ENCODE measurements at regions of chr15 and their contacts with region 1.

Region 1: DNA sequence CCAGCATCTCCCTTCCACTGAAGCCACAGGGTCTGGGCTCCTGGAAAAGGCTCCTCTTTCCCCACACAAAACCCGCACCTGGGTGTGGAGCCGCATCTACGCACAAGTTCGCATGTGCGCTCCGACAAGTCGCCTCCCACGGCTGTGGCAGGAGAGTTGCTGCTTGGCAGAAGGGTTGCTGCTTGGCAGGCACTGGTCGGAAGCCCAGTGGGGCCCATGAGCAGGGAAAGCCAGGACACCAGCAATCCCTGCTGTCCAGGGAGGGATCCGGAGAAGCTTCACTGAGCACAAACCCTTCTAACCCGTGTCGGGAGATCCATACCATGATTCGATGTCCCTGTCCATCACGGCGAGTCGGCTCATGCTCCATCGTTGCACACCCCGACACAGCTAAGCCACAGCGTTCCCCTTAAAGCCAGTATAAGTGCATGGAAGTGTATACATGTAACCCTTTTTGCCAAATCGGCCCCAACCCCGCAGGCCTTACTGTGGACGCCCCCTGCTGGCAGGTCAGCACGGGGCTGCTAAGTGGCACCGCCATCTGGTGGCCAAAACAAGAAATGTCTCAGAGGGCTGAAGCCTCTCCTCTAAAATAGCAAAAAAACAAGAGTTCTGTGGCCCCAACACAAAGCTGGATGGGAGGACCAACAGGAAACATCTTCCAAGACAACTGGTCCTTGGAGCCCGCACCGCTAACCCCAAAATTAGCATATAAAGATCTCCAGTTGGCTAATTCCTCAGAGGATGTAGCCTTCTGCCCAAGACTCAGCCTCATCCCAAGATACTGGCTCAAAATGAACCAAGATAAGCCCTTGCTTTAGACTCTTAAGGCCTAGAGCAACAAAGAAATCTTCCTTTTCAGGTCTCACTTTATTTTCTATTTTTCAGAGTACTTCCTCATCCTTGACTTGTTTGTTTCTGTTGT is 8.3 kb downstream of the ANKRD63 start:
- DNase-seq: peak; percentile 83
- H3K4me3 Mint-ChIP-seq: no peak overlapping the region
- H3K27ac Mint-ChIP-seq: no peak overlapping the region
- H3K4me1 Mint-ChIP-seq: peaks cover 5% of the 10 kb centered on the region
- H3K27me3 Mint-ChIP-seq: peaks cover 31% of the 10 kb centered on the region

Region 2: GRCh38 chr15:40029979-40030893 is 244.4 kb before region 1 on chr15:
- intact Hi-C with region 1: loop called (anchors 1 kb)
- DNase-seq: no peak
- H3K4me3 Mint-ChIP-seq: no peak overlapping the region
- H3K27ac Mint-ChIP-seq: no peak overlapping the region
- H3K4me1 Mint-ChIP-seq: no peaks in the 10 kb centered on the region
- H3K27me3 Mint-ChIP-seq: no peaks in the 10 kb centered on the region

Region 3: GRCh38 chr15:40217159-40217824 is 57.3 kb before region 1 on chr15:
- intact Hi-C with region 1: loop called (anchors 1 kb)
- DNase-seq: peak; percentile 38
- H3K4me3 Mint-ChIP-seq: no peak overlapping the region
- H3K27ac Mint-ChIP-seq: no peak overlapping the region
- H3K4me1 Mint-ChIP-seq: no peaks in the 10 kb centered on the region
- H3K27me3 Mint-ChIP-seq: no peaks in the 10 kb centered on the region

Region 4: GRCh38 chr15:40338041-40338657 is 63.5 kb after region 1 on chr15:
- intact Hi-C with region 1: loop called (anchors 1 kb)
- DNase-seq: peak; percentile 70
- H3K4me3 Mint-ChIP-seq: no peak overlapping the region
- H3K27ac Mint-ChIP-seq: no peak overlapping the region
- H3K4me1 Mint-ChIP-seq: peaks cover 18% of the 10 kb centered on the region
- H3K27me3 Mint-ChIP-seq: peaks cover 2% of the 10 kb centered on the region

Region 5: DNA sequence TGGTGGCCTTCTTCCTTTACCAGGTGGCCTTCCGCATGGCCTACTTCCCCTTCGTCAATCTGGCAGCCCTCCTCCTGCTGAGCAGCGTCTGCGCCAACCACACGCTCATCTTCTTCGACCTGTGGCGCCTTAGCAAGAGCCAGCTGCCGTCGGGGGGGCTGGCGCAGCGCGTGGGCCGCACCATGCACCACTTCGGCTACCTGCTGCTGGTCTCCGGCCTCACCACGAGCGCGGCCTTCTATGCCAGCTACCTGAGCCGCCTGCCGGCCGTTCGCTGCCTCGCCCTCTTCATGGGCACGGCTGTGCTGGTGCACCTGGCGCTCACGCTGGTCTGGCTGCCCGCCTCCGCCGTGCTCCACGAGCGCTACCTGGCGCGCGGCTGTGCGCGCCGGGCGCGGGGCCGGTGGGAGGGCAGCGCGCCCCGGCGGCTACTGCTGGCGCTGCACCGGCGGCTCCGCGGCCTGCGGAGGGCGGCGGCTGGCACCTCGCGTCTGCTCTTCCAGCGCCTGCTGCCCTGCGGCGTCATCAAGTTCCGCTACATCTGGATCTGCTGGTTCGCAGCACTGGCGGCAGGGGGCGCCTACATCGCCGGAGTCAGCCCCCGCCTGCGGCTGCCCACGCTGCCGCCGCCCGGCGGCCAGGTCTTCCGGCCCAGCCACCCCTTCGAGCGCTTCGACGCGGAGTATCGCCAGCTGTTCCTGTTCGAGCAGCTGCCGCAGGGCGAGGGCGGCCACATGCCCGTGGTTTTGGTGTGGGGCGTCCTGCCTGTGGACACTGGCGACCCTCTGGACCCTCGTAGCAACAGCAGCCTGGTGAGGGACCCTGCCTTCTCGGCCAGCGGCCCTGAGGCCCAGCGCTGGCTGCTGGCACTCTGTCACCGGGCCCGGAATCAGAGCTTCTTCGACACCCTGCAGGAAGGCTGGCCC is 93.3 kb after region 1 on chr15:
- intact Hi-C with region 1: no loop called
- DNase-seq: peak; percentile 83
- H3K4me3 Mint-ChIP-seq: peak overlapping the region; percentile 75
- H3K27ac Mint-ChIP-seq: no peak overlapping the region
- H3K4me1 Mint-ChIP-seq: peaks cover 11% of the 10 kb centered on the region
- H3K27me3 Mint-ChIP-seq: peaks cover 12% of the 10 kb centered on the region